ENCODE measurements at regions of chr6 and their contacts with region 1.

Region 1: GRCh38 chr6:157021344-157021992 is 244.3 kb downstream of the ARID1B start:
- DNase-seq: peak; percentile 72 to 85
- H3K4me3 ChIP-seq: peak overlapping the region; percentile 96
- H3K27ac ChIP-seq: peak overlapping the region; percentile 90
- H3K4me1 ChIP-seq: peaks cover 20% of the 10 kb centered on the region; the same call in 1 of the 2 replicates
- H3K27me3 ChIP-seq: no peaks in the 10 kb centered on the region
- CTCF ChIP-seq: no peak; the same call in 1 of the 2 replicates

Region 2: DNA sequence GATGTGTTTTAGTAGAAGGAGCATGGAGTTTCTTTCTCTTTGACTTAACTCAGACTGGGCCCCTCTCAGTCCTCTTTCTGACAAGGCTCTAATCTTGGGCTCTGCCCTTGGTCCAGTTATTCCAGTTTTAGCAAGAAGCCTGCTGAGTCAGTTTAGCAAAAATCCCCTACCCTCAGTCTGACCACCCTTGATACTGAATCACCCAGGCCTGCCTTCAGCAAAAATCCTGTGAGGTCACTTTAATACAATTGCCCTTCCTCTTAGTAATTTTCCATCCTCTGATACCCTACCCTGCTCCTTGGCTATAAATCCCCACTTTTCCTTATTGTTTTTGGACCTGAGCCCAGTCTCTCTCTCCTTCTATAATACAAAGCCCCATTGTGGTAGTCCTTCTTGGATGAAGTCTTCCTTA is 1239.1 kb before region 1 on chr6:
- CTCF ChIA-PET with region 1: no interaction called
- POLR2A ChIA-PET with region 1: no interaction called
- intact Hi-C with region 1: loop called (anchors 5 kb)
- DNase-seq: peak; percentile 64 to 97
- H3K4me3 ChIP-seq: peak overlapping the region; percentile 37; the same call in 1 of the 2 replicates
- H3K27ac ChIP-seq: peak overlapping the region; percentile 95
- H3K4me1 ChIP-seq: peaks cover 48% of the 10 kb centered on the region
- H3K27me3 ChIP-seq: no peaks in the 10 kb centered on the region
- CTCF ChIP-seq: no peak

Region 3: GRCh38 chr6:156564127-156564806 is 457.2 kb before region 1 on chr6:
- CTCF ChIA-PET with region 1: no interaction called
- POLR2A ChIA-PET with region 1: no interaction called
- intact Hi-C with region 1: loop called (anchors 1 kb)
- DNase-seq: peak in 1 of 2 experiments; percentile 59
- H3K4me3 ChIP-seq: no peak overlapping the region
- H3K27ac ChIP-seq: no peak overlapping the region
- H3K4me1 ChIP-seq: no peaks in the 10 kb centered on the region
- H3K27me3 ChIP-seq: no peaks in the 10 kb centered on the region
- CTCF ChIP-seq: peak; percentile 92

Region 4: GRCh38 chr6:156686995-156687788 is 334.3 kb before region 1 on chr6:
- CTCF ChIA-PET with region 1: no interaction called
- POLR2A ChIA-PET with region 1: no interaction called
- intact Hi-C with region 1: loop called (anchors 1 kb)
- DNase-seq: peak; percentile 43 to 82
- H3K4me3 ChIP-seq: peak overlapping the region; percentile 82
- H3K27ac ChIP-seq: peak overlapping the region; percentile 86
- H3K4me1 ChIP-seq: peaks cover 16% of the 10 kb centered on the region
- H3K27me3 ChIP-seq: no peaks in the 10 kb centered on the region
- CTCF ChIP-seq: no peak

Region 5: DNA sequence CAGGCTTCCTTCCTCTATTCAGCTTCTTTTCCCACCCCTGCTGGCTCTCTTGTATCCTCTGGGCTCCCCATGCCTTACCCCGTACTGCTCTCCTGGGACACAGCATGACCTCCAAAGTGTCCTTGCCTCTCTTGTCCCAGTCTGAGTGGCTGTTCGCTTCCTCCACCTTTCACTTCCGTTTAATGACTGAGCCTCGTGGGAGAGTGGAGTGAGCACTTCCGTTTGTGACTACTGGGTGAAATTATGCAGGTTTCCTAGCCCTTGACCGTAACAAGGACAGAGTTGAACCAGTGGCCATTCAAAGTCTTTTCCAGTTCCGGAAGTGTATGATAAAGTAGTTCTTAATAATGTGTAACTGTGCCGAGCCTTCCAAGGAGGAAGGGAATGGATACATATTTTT is 135.1 kb before region 1 on chr6:
- CTCF ChIA-PET with region 1: no interaction called
- POLR2A ChIA-PET with region 1: no interaction called
- intact Hi-C with region 1: loop called (anchors 10 kb)
- DNase-seq: no peak
- H3K4me3 ChIP-seq: no peak overlapping the region
- H3K27ac ChIP-seq: no peak overlapping the region
- H3K4me1 ChIP-seq: peaks cover 12% of the 10 kb centered on the region
- H3K27me3 ChIP-seq: no peaks in the 10 kb centered on the region
- CTCF ChIP-seq: no peak

Region 6: GRCh38 chr6:156953479-156954146 is 67.9 kb before region 1 on chr6:
- CTCF ChIA-PET with region 1: no interaction called
- POLR2A ChIA-PET with region 1: no interaction called
- intact Hi-C with region 1: loop called (anchors 1 kb)
- DNase-seq: peak; percentile 56 to 93
- H3K4me3 ChIP-seq: no peak overlapping the region; the same call in 1 of the 2 replicates
- H3K27ac ChIP-seq: peak overlapping the region; percentile 35
- H3K4me1 ChIP-seq: peaks cover 40% of the 10 kb centered on the region
- H3K27me3 ChIP-seq: no peaks in the 10 kb centered on the region
- CTCF ChIP-seq: 0 out of 2 replicates have a peak, but pooled peaks have one; percentile 16

Region 7: GRCh38 chr6:157571269-157571668 is 549.8 kb after region 1 on chr6:
- CTCF ChIA-PET with region 1: no interaction called
- POLR2A ChIA-PET with region 1: no interaction called
- intact Hi-C with region 1: no loop called
- DNase-seq: no peak
- H3K4me3 ChIP-seq: no peak overlapping the region
- H3K27ac ChIP-seq: no peak overlapping the region
- H3K4me1 ChIP-seq: no peaks in the 10 kb centered on the region
- H3K27me3 ChIP-seq: no peaks in the 10 kb centered on the region
- CTCF ChIP-seq: no peak

Measured in PC-9 (cell line).